ENCODE measurements at regions of chr18 and their contacts with region 1.

Region 1: DNA sequence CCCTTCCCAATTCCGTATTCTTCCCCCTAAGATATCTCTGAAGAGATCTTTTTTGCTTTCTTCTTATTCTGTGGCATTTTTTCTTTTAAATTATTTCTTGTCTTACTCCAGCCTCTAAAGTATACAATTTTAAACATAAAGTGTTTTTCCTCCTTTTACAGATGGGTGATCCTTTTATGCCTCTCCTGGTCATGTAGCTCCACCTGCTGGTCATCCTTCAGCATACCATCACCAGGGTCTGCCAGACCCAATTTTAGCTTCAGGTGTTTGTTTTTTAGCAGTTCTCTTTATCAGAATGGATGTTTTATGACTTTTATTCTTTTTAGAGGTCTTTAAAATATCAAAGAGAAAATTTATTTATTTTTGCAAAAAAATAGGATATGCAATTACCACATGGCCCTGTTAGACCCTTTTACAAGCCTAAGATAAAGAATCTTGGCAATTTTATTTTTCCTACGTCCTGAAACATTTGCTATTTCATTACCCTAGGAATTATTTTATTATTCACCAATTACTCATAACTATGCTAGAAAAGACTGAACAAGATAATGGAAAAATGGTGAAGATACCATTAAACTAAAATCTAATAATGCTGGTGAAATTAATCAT is 55.5 kb downstream of the PIGN start:
- DNase-seq: peak; percentile 87
- H3K4me3 Mint-ChIP-seq: no peak overlapping the region
- H3K27ac Mint-ChIP-seq: no peak overlapping the region
- H3K4me1 Mint-ChIP-seq: peaks cover 4% of the 10 kb centered on the region
- H3K27me3 Mint-ChIP-seq: no peaks in the 10 kb centered on the region

Region 2: GRCh38 chr18:61322265-61322873 is 809.0 kb before region 1 on chr18:
- intact Hi-C with region 1: loop called (anchors 2 kb)
- DNase-seq: peak; percentile 82
- H3K4me3 Mint-ChIP-seq: no peak overlapping the region
- H3K27ac Mint-ChIP-seq: no peak overlapping the region
- H3K4me1 Mint-ChIP-seq: no peaks in the 10 kb centered on the region
- H3K27me3 Mint-ChIP-seq: no peaks in the 10 kb centered on the region

Region 3: GRCh38 chr18:61551586-61551985 is 579.8 kb before region 1 on chr18:
- intact Hi-C with region 1: loop called (anchors 1 kb)
- DNase-seq: peak; percentile 72
- H3K4me3 Mint-ChIP-seq: no peak overlapping the region
- H3K27ac Mint-ChIP-seq: no peak overlapping the region
- H3K4me1 Mint-ChIP-seq: no peaks in the 10 kb centered on the region
- H3K27me3 Mint-ChIP-seq: peaks cover 6% of the 10 kb centered on the region

Region 4: GRCh38 chr18:61581578-61582201 is 549.7 kb before region 1 on chr18:
- intact Hi-C with region 1: loop called (anchors 1 kb)
- DNase-seq: peak; percentile 88
- H3K4me3 Mint-ChIP-seq: no peak overlapping the region
- H3K27ac Mint-ChIP-seq: no peak overlapping the region
- H3K4me1 Mint-ChIP-seq: peaks cover 2% of the 10 kb centered on the region
- H3K27me3 Mint-ChIP-seq: peaks cover 14% of the 10 kb centered on the region

Region 5: DNA sequence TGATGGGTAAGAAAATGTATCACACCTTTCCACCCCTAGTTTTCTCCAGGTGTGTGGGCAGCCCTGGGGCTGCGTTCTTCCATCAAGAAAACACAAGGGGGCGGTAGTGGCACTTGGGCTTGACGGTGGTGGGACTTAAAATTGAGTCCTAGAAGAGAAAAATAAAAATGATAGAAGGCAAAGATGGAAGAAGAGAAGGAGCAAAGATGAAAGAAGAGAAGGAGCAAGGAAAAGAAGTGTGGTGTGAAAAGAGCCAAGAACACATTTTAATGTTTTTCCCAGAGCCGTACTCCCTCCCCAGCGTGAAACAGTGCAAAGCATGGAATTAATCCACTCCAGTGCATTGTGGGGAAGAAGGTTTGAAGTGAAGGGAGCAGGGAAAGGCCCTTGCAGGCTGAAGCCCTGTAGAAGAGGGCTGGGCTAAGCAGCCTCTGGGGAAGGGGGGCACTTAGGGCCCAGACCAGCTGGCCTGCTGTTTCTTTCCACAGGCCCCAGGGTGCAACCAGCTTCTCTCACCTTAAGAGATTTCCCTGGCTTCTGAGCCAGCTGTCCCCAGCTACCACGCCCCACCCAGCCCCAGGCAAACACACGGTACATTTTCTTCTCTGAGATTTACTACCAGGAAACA is 495.4 kb before region 1 on chr18:
- intact Hi-C with region 1: loop called (anchors 1 kb)
- DNase-seq: peak; percentile 77
- H3K4me3 Mint-ChIP-seq: no peak overlapping the region
- H3K27ac Mint-ChIP-seq: no peak overlapping the region
- H3K4me1 Mint-ChIP-seq: no peaks in the 10 kb centered on the region
- H3K27me3 Mint-ChIP-seq: peaks cover 3% of the 10 kb centered on the region

Region 6: GRCh38 chr18:61870151-61870550 is 261.3 kb before region 1 on chr18:
- intact Hi-C with region 1: loop called (anchors 10 kb)
- DNase-seq: no peak
- H3K4me3 Mint-ChIP-seq: no peak overlapping the region
- H3K27ac Mint-ChIP-seq: no peak overlapping the region
- H3K4me1 Mint-ChIP-seq: no peaks in the 10 kb centered on the region
- H3K27me3 Mint-ChIP-seq: peaks cover 2% of the 10 kb centered on the region

Region 7: DNA sequence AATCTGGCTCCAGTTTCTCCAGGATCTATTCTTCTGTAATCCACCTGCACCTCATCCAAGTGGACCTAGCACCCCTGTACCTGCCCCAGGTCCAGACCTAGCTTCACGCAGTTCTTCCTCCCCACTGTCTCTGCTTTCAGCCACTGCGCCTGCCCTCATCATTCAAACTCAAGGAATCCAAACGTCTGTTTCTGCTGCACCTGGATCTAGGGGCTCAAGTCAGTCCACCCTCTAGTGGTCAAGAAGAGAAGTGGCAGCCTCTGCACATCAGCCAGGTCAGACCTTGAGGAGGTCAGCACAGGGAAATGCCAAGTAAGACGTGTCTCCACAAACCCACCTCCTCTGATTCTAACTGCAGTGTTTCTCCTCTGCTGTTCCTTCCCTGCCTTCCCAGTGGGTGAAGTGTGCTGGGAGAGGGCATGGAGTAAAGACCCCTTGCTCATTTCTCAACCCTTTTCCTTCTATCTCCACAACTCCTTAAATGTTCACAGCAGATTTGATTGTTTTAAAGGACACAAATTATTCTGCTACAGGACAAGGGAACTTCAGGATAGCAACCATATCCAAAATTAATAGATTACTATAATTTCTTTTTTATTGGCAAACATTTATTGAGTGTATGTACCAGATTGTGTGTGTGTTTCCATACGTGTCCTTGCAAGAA is 229.9 kb before region 1 on chr18:
- intact Hi-C with region 1: loop called (anchors 5 kb)
- DNase-seq: peak; percentile 79
- H3K4me3 Mint-ChIP-seq: no peak overlapping the region
- H3K27ac Mint-ChIP-seq: no peak overlapping the region
- H3K4me1 Mint-ChIP-seq: peaks cover 2% of the 10 kb centered on the region
- H3K27me3 Mint-ChIP-seq: peaks cover 45% of the 10 kb centered on the region